ENCODE measurements at regions of chr3 and their contacts with region 1.

Region 1: DNA sequence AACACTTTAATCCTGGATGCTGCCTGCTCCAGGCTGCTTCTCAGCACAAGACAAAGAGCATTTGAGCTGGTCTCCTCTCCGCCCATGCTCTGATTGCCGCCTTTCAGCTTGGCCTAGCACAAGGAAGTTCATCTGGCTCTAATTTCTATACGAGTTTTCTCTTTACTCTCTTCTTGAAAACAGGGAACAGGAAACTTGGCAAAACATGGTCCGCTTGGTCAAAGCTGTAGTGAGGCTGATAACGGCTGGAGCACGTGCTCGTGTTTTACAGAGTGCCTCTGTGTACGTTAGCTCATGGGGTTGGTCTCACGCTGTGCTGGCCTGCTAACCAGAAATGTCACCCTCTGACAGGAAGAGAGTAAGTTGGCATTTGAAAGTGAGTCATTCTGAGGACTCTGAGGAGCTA is 19.2 kb downstream of the RARRES1 start:
- DNase-seq: peak in 1 of 10 donors; percentile 34

Region 2: DNA sequence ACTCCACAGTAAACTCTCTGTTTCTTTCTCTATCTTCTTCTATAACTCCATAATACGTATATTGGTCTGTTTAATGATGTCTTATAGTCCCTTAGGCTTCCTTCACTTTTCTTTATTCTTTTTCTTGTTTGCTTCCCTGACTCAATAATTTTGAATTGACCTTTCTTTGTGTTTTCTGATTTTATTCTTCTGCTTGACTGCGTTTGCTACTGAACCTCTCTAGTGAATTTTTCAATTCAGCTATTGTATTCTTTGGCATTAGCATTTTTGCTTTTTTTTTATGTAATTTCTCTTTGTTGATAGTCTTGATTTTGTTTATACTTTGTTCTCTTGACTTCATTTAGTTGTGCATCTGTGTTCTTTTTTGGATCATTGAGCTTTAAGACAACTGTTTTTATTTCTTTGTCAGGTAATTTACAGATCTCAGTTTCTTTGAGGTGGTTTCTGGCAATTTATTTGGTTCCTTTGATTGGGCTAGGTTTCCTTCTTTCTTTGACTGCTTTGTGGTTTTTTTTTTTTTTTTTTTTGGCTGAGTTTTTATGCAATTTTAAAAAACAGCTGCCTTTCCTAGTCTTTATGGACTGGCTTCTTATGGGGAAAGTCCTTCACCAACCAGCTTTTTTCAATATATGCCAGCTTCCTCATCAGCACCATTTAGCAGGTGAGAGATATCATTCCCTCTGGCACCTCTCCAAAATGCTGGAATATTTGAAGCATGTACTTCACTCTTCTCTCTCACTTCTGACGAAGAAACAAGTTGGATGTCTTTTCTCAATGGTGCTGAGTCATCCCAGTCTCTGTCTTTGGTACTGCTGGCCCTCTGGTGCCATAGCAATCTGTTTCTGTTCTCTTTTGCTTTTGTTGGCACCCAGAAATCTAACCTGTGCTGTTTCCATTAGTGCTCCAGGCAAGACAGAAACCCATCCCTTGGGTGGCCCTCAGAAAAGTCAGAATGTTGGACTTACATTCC is 585.6 kb before region 1 on chr3:
- intact Hi-C with region 1: loop called (anchors 10 kb)
- DNase-seq: no peak

Measured in posterior cingulate gyrus (tissue), 11 donors.